Activated CD4-positive, alpha-beta T cell treated with anti-CD3 and anti-CD28 coated beads for 36 hours (primary cell): ENCODE measurements at regions of chr5 and their contacts with region 1.

Region 1: GRCh38 chr5:40736103-40736875 is 19.5 kb downstream of the TTC33 start:
- DNase-seq: no peak
- ATAC-seq: peak; percentile 72
- H3K4me3 Mint-ChIP-seq: no peak overlapping the region
- H3K27ac Mint-ChIP-seq: peak overlapping the region; percentile 69
- H3K4me1 Mint-ChIP-seq: peaks cover 22% of the 10 kb centered on the region
- H3K27me3 Mint-ChIP-seq: no peaks in the 10 kb centered on the region

Region 2: DNA sequence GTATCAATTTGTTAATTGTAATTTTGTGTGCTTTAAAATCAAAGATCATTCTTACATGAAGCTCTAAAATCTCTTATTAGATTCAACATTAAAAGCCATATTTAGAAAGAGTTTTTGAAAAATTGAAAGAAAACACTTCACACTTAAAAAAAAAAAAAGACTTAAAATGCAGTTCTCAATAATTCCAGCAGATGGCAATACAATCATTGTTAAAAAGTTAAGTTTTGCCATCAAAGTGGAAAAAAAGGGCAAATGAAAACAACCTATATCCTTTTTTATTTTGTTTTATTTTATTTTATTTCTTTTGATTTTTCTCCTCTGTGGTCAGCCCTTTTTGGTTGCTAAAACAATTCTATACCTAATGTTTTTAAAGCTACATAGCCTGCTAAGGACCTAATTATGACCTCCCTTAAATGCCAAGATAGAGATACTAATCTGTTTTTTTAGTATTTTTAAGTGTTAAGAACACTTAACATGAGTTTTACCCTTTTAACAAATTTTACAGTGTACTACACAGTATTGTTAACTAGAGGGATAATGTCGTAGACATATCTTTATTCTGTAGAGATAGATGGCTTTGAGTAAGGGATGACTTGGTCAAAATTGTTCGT is 1157.3 kb before region 1 on chr5:
- CTCF ChIA-PET with region 1: interaction called, 3 read pairs
- POLR2A ChIA-PET with region 1: no interaction called
- intact Hi-C with region 1: loop called (anchors 5 kb)
- DNase-seq: no peak
- ATAC-seq: no peak
- H3K4me3 Mint-ChIP-seq: no peak overlapping the region
- H3K27ac Mint-ChIP-seq: no peak overlapping the region
- H3K4me1 Mint-ChIP-seq: peaks cover 8% of the 10 kb centered on the region
- H3K27me3 Mint-ChIP-seq: no peaks in the 10 kb centered on the region

Region 3: GRCh38 chr5:39714036-39714698 is 1022.1 kb before region 1 on chr5:
- CTCF ChIA-PET with region 1: interaction called, 3 read pairs
- POLR2A ChIA-PET with region 1: no interaction called
- intact Hi-C with region 1: loop called (anchors 1 to 2 kb)
- DNase-seq: peak; percentile 52
- ATAC-seq: peak; percentile 51
- H3K4me3 Mint-ChIP-seq: no peak overlapping the region
- H3K27ac Mint-ChIP-seq: no peak overlapping the region
- H3K4me1 Mint-ChIP-seq: no peaks in the 10 kb centered on the region
- H3K27me3 Mint-ChIP-seq: peaks cover 8% of the 10 kb centered on the region

Region 4: GRCh38 chr5:39948867-39949468 is 787.3 kb before region 1 on chr5:
- CTCF ChIA-PET with region 1: interaction called, 17 read pairs
- POLR2A ChIA-PET with region 1: no interaction called
- intact Hi-C with region 1: loop called (anchors 1 kb)
- DNase-seq: peak; percentile 70
- ATAC-seq: peak; percentile 97
- H3K4me3 Mint-ChIP-seq: no peak overlapping the region
- H3K27ac Mint-ChIP-seq: no peak overlapping the region
- H3K4me1 Mint-ChIP-seq: peaks cover 5% of the 10 kb centered on the region
- H3K27me3 Mint-ChIP-seq: no peaks in the 10 kb centered on the region

Region 5: DNA sequence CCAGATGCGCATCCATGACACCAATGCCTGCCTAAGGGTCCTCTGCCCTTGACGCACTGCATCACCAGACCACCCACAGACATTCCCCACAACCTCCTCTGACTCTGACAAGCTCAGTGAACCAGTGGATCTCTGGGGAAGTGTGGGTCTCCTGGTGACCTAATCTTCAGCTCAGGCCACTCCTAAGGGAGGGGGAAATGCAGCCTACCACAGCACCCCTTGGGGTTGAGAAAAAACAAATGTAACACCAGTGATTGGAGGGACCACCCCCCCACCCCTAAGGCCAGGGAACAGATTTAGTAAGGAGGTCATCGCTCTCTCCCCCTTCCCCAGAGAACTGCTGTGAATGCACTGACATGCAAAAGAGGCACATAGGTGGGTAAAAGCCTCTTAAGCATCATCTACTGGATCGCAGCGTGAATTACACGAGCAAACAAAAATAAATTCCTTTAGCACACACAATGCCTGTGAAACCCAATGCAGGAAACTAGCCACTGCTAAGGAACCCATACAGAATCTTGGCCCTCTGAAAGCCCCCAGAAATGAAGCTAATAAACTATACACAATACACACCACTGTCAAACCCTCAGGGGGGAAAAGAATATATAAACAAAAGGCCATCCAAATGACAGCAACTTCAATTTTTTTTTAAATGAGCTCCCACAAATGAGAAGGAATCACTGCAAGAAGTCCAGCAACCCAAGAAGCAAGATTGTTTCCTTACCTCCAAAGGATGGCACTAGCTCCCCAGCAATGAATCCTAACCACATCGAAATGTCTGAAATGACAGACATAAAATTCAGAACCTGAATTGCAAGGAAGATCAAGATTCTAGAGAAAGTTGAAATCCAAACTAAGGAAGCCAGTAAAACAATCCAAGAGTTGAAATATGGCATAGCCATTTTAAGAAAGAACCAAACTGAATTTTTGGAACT is 570.2 kb before region 1 on chr5:
- CTCF ChIA-PET with region 1: no interaction called
- POLR2A ChIA-PET with region 1: no interaction called
- intact Hi-C with region 1: loop called (anchors 1 kb)
- DNase-seq: peak; percentile 39
- ATAC-seq: no peak
- H3K4me3 Mint-ChIP-seq: no peak overlapping the region
- H3K27ac Mint-ChIP-seq: no peak overlapping the region
- H3K4me1 Mint-ChIP-seq: peaks cover 11% of the 10 kb centered on the region
- H3K27me3 Mint-ChIP-seq: no peaks in the 10 kb centered on the region

Region 6: GRCh38 chr5:40594811-40595210 is 141.5 kb before region 1 on chr5:
- CTCF ChIA-PET with region 1: no interaction called
- POLR2A ChIA-PET with region 1: no interaction called
- intact Hi-C with region 1: no loop called
- DNase-seq: no peak
- ATAC-seq: no peak
- H3K4me3 Mint-ChIP-seq: no peak overlapping the region
- H3K27ac Mint-ChIP-seq: no peak overlapping the region
- H3K4me1 Mint-ChIP-seq: peaks cover 21% of the 10 kb centered on the region
- H3K27me3 Mint-ChIP-seq: peaks cover 2% of the 10 kb centered on the region